ENCODE measurements at regions of chr1 and their contacts with region 1.

Region 1: GRCh38 chr1:148334339-148335130 is 148.6 kb downstream of the PPIAL4G start:
- DNase-seq: peak; percentile 76
- ATAC-seq: peak; percentile 82
- H3K4me3 Mint-ChIP-seq: peak overlapping the region; percentile 97
- H3K27ac Mint-ChIP-seq: peak overlapping the region; percentile 99
- H3K4me1 Mint-ChIP-seq: peaks cover 25% of the 10 kb centered on the region
- H3K27me3 Mint-ChIP-seq: peaks cover 48% of the 10 kb centered on the region

Region 2: DNA sequence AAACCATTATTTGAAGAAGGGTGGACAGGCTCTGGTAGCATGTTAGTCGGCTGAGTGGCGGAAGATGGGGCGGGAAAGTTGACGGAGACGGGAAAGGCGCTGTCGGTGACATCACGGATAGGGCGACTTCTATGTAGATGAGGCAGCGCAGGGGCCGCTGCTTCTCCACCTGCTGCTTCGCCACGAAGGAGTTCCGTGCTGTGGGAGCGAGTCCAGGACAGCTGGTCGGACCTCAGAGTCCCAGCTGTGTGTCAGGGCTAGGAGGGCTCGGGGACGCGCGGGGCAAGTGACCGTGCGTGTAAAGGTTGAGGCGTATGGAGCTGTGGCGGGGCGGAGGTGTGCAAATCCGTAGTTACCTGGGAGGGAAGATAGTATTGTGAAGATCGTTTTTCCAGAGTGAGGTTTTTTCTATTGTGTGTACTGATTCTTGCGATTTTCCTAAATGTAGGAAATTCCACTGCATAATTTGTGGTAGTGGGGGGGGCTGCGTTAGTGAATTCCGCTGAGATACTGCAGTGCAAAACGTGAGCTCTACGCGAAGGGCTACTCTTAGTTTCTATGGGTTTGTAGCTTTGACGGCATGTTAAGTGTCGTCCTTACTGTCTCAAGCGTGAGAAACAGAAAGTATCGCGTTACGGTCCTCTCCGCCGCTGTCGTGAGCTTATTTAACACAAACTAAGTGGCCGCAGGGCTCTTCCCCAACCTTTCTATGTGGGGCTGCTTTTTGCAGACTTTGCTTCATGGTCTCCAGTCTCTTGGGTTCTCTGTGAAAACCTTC is 71.2 kb before region 1 on chr1:
- POLR2A ChIA-PET with region 1: interaction called, 93 read pairs
- DNase-seq: peak; percentile 67
- ATAC-seq: peak; percentile 88
- H3K4me3 Mint-ChIP-seq: peak overlapping the region; percentile 86
- H3K27ac Mint-ChIP-seq: peak overlapping the region; percentile 84
- H3K4me1 Mint-ChIP-seq: peaks cover 12% of the 10 kb centered on the region
- H3K27me3 Mint-ChIP-seq: peaks cover 29% of the 10 kb centered on the region

Region 3: DNA sequence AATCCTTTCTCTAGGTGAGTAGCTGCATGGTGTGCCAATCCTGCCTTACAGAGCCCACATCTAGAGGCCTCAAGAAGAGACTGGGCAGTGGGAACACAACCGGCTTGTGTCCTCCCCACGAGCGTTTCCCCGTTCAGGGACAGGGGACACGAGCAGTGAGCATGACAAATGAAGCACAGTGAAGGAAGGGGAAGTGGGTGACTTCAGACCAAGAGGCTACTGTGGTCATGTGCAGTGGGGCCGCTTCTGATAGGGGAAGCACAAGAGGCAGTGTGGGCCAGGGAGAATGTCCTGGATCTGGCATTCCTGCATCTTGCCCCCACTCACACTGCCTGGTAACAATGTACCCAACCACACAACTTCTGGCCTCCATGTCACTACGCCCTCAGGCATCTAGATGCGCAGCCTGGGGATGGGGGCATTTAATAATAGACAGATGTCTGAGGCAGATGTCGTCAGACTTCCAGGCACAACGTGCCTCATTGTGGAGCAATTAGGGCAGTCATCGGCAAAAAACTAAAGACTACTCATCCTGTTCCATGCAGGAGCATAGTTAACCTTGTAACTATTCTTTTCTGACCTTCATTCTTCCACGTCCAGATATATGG is 26.8 kb before region 1 on chr1:
- POLR2A ChIA-PET with region 1: interaction called, 10 read pairs
- DNase-seq: no peak
- ATAC-seq: no peak
- H3K4me3 Mint-ChIP-seq: no peak overlapping the region
- H3K27ac Mint-ChIP-seq: no peak overlapping the region
- H3K4me1 Mint-ChIP-seq: peaks cover 29% of the 10 kb centered on the region
- H3K27me3 Mint-ChIP-seq: peaks cover 55% of the 10 kb centered on the region

Region 4: DNA sequence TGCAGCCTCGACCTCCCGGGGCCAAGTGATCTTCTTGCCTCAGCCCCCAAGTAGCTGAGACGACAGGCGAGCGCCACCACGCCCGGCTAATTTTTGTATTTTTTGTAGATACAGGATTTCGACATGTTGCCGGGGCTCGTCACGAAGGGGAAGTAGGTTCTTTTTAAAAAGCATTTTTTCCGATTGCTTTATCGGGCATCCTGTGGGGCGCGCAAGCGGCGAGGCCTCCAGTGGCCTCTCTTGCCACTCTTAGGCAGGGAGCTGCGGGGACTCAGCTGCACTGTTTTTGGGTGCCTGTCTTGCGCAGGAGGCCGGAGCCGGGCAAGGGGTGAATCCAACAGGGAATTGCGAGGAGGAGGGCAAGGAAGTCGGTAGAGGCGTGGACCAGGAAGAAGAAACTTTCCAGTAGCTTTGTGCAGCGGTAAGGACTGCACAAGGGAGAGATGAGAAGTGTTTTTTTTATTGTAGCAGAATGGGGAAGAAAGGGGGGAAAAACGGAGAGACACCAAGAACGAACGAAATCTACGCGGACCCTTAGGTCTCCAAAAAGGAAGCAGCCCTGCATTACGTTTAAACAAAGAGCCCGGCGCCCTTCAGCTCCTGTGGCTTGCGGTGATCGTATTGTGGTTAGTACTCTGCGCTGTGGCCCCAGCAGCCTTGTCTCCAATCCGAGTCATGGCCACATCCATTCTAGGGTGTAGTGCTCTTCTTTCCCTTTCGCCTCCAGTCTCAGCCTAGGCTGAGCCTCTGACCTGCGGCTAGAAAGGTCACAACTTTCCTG is 16.2 kb before region 1 on chr1:
- POLR2A ChIA-PET with region 1: interaction called, 26 read pairs
- DNase-seq: peak; percentile 75
- ATAC-seq: peak; percentile 87
- H3K4me3 Mint-ChIP-seq: peak overlapping the region; percentile 89
- H3K27ac Mint-ChIP-seq: peak overlapping the region; percentile 86
- H3K4me1 Mint-ChIP-seq: peaks cover 29% of the 10 kb centered on the region
- H3K27me3 Mint-ChIP-seq: peaks cover 45% of the 10 kb centered on the region

Region 5: GRCh38 chr1:148372731-148373130 is 38.2 kb after region 1 on chr1:
- POLR2A ChIA-PET with region 1: interaction called, 15 read pairs
- DNase-seq: no peak
- ATAC-seq: peak; percentile 77
- H3K4me3 Mint-ChIP-seq: peak overlapping the region; percentile 81
- H3K27ac Mint-ChIP-seq: peak overlapping the region; percentile 98
- H3K4me1 Mint-ChIP-seq: peaks cover 45% of the 10 kb centered on the region
- H3K27me3 Mint-ChIP-seq: no peaks in the 10 kb centered on the region